ENCODE measurements at regions of chr12 and their contacts with region 1.

Region 1: DNA sequence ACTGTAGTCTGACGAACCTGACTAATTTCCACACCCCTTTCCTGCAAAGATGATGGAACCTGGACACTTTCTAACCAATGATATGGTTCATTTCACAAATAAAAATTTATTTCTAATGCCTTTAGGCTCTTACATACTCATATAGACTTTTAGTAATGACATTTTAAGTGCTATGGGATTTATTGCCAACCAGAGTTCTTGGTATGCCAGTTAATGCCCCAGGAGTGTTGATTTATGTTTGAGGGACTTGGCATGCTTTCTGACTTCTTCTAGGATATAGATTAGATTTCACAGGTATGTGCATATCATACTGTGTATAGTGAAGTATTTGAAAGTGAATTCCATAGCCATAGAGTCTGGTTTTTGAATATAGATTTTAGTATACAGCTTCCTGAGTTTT is 159.5 kb downstream of the CFAP54 start:
- DNase-seq: no peak
- ATAC-seq: no peak
- H3K4me3 Mint-ChIP-seq: no peak overlapping the region
- H3K27ac Mint-ChIP-seq: no peak overlapping the region
- H3K4me1 Mint-ChIP-seq: no peaks in the 10 kb centered on the region
- H3K27me3 Mint-ChIP-seq: no peaks in the 10 kb centered on the region
- CTCF ChIP-seq: no peak

Region 2: DNA sequence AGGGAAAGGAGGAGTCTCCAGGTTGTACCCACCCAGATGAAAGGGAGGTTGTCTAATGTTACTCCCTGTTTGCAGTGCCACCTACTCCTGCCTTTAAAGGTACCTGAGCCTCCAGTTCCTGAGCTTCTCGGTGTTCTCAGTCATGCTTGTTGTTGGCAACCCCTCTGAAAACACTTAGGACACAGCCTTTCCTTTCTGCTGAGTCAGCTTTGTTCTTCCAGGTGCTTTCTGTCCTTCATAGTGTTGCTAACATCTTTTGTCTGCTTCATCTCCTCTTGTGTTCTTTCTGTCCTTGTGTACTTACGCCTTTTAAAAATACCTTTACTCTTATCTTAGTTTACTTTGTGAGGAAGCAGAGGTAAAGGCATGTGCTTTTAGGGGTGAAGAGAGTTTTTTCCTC is 161.1 kb after region 1 on chr12:
- CTCF ChIA-PET with region 1: no interaction called
- POLR2A ChIA-PET with region 1: interaction called, 15 read pairs
- intact Hi-C with region 1: no loop called
- DNase-seq: no peak
- ATAC-seq: no peak
- H3K4me3 Mint-ChIP-seq: no peak overlapping the region
- H3K27ac Mint-ChIP-seq: no peak overlapping the region
- H3K4me1 Mint-ChIP-seq: no peaks in the 10 kb centered on the region
- H3K27me3 Mint-ChIP-seq: no peaks in the 10 kb centered on the region
- CTCF ChIP-seq: no peak